ENCODE measurements at regions of chr1 and their contacts with region 1.

Region 1: DNA sequence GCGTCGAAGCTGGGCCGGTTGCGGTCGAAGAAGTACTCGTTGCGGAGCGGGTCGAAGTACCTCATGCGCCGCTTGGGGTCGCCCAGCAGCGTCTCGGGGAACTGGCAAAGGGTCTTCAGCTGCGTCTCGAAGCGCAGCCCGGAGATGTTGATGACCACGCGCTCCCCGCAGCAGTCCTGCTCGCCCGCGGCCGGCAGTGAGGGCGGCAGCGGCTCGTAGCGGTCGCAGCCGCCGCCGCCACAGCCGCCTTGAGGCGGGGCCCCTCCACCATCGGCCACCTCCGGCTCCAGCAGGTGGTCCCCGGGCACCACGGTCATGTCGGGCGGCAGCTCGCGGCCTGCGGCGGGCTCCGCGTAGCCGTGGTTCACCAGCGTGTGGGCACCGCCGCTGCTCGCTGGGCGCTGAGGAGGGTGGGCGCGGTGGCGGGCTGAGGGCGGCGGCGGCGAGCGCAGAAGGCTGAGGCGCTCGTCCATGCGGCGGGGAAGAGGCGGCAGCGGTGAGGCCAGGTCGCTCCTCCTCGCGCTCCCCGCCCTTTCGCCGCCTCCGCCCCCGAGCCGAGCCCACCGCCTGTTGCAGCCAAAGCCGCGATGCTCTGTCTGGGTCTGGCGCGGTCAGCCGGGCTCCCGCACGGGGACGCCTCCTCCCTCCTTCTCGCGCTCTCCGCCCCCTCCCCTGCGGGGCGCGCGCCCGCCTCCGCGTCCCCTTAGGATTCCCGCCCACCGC is at the start of gene KCNA3:
- DNase-seq: peak in 7 of 10 donors; percentile 33 to 82 (median 48)
- H3K4me3 ChIP-seq: peak within 1 kb of the TSS; percentile 43 to 76 (median 63)
- H3K27ac ChIP-seq: peak within 1 kb of the TSS in 57 of 59 donors; percentile 10 to 94 (median 75)
- H3K27me3 ChIP-seq: peaks cover 0 to 79% (median 45%) of the 10 kb centered on the region in 45 donors
- CTCF ChIP-seq: peak in 4 of 56 donors; percentile 11 to 27 (median 18)
- total RNA-seq, gene KCNA3: 4.9 to 30.7 (median 16.4) TPM

Region 2: DNA sequence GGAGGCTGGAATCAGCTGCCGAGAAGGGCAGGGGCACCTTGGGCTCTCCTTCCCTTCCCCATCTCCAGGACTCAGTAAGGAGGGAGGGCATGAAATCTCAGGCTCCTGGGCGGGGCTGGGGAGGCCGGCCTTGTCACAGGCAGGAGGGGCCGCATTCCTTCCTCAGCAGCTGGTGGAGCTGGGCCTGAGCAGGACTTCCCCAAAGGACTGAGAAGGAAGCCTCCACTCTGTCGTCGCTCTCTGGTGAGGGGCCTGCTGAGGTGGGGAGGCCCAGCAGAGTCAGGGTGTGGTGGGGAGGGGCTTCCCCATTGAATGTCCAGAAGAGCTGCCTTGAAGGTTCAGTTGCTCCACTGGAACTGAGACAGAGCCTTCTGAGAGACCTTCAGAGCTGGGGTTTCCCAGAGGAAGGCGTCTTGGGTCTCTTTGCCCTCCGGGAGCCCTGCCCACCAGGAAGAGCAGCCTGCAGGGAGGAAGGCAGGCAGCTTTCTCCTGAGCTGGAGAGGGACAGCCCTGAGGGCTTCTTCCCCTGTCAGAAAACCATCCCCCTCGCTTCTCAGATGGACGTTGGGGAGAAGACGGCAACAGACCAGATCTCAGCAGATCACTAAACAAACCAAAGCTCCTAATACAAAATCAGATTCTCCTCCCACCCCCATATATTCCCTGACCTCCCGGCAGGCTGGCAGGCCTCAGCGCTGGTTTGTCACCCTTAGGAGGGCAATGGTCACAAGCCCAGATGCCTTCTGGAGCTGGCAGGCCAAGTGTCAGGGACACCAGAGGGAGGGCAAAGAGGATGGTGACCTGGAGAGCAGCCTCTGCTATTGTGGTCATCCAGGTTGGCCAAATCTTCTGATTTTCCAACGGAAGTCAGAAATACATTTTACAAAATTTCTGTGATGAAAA is 166.2 kb before region 1 on chr1:
- intact Hi-C with region 1: no loop called
- DNase-seq: no peak
- H3K4me3 ChIP-seq: no peak overlapping the region
- H3K27ac ChIP-seq: no peak overlapping the region
- H3K27me3 ChIP-seq: peaks cover 0 to 3% (median 0%) of the 10 kb centered on the region in 45 donors
- CTCF ChIP-seq: no peak

Region 3: DNA sequence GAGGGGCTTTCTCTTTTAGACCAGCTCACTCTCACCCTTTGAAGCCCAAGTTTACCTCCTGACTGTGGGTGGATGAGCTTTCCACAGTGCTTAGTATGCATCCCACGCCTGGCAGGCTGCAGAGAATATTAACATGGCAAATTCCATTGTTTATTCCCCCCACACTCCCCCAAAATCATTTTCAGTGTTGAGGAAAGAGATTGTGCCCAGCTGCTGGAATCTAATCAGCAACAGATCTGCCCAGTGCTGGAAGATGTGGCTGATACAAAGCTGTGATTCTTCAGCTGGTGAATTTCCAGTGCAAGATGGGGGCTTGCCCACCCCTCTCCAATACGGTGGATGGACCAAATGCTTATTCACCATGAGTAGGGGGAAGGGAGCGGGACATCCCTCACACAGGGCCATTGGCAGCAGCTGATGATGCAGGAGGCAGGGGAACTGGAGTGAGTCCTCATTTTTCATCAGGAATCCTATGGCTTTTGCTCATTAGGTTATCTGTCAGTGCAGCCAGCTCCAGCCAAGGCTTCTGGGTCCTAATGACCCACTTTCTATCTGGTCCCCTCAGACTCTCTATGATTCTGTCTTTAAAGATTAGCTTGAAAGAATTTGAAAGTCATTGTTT is 40.0 kb after region 1 on chr1:
- intact Hi-C with region 1: loop called in 1 of 2 experiments (anchors 5 kb)
- DNase-seq: peak in 5 of 10 donors; percentile 48 to 64 (median 48)
- H3K4me3 ChIP-seq: peak overlapping the region in 4 of 59 donors; percentile 8 to 40 (median 10)
- H3K27ac ChIP-seq: peak overlapping the region in 58 of 59 donors; percentile 2 to 89 (median 70)
- H3K27me3 ChIP-seq: peaks cover 0 to 4% (median 0%) of the 10 kb centered on the region in 45 donors
- CTCF ChIP-seq: no peak

Measured in dorsolateral prefrontal cortex (tissue), 120 donors.